BJ (cell line): ENCODE measurements at regions of chr4 and their contacts with region 1.

Region 1: DNA sequence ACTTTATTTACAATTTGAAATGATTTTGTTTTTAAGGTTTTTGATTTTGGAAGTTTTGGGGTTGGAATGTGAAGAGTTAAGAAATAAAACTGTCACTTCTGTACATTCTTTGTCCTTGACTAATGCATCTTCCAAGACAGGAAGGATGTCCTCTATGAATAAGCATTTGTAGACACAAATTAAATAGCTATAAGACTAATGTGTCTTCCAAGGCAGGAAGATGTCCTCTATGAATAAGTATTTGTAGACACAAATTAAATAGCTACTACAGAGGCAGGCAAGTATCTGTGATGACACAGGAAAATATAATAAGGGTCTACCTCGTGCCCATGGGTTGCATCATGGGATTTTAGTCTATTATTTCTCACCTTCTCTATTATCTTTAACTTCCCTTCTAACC is 14.5 kb downstream of the PRSS48 start:
- DNase-seq: no peak
- H3K4me3 ChIP-seq: no peak overlapping the region
- H3K27me3 ChIP-seq: no peaks in the 10 kb centered on the region
- CTCF ChIP-seq: no peak

Region 2: GRCh38 chr4:151117371-151117962 is 174.0 kb before region 1 on chr4:
- CTCF ChIA-PET with region 1: no interaction called
- POLR2A ChIA-PET with region 1: no interaction called
- DNase-seq: no peak
- H3K4me3 ChIP-seq: no peak overlapping the region
- H3K27me3 ChIP-seq: no peaks in the 10 kb centered on the region
- CTCF ChIP-seq: peak; percentile 79

Region 3: GRCh38 chr4:151226004-151226932 is 65.2 kb before region 1 on chr4:
- CTCF ChIA-PET with region 1: no interaction called
- POLR2A ChIA-PET with region 1: interaction called, 19 read pairs
- DNase-seq: peak; percentile 62
- H3K4me3 ChIP-seq: peak overlapping the region; percentile 40
- H3K27me3 ChIP-seq: no peaks in the 10 kb centered on the region
- CTCF ChIP-seq: no peak